ENCODE measurements at regions of chr1 and their contacts with region 1.

Region 1: GRCh38 chr1:23539698-23540266 is 8.7 kb upstream of the E2F2 start:
- DNase-seq: peak; percentile 79 to 93 (median 85)
- ATAC-seq: peak; percentile 91 to 95 (median 94)
- H3K4me3 ChIP-seq: peak overlapping the region in 1 of 4 donors; percentile 21
- H3K27ac ChIP-seq: no peak overlapping the region
- H3K4me1 ChIP-seq: peaks cover 0 to 7% (median 0%) of the 10 kb centered on the region in 3 donors
- H3K27me3 ChIP-seq: no peaks in the 10 kb centered on the region
- CTCF ChIP-seq: peak; percentile 76 to 90 (median 89)

Region 2: DNA sequence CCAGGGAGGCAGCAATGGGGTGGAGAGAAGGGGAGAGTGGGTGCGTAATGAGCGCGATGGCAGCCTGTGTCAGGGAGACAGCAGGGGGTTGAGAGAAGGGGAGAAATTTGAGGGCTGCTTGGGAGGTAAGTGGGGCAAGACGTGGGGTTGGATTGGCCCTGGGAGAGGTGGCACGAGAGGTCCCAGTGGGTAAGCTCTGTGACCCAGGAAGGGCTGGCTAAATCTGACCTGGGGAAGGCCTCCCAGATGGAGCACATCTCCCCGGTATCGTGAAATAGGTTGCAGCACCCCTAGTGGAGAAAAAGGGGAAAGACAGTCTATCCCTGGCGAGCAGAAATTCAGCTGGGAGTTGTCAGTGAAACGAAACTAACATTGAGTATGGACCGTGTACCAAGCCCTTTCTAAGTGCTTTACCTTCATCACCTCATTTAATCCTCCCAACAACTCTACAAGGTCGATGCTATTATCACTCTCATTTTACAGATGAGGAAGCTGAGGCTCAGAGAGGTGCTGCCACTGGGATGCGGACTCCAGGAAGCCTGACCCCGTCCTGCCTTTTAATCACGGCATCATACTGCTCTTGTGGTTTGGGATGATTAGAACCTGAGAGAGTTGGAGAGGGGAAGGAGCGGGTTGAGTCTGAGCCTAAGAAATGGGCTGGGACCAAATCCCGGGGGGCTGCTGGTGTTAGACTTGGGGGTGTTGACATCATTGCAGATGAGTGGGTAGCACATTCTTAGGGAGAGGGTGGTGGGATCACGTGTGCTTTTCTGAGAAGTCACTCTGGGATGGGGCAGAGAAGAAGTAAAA is 95.3 kb after region 1 on chr1:
- intact Hi-C with region 1: loop called (anchors 2 to 10 kb)
- DNase-seq: peak in 4 of 6 donors; percentile 43 to 73 (median 52)
- ATAC-seq: peak; percentile 68 to 89 (median 85)
- H3K4me3 ChIP-seq: peak overlapping the region in 1 of 4 donors; percentile 28
- H3K27ac ChIP-seq: peak overlapping the region in 1 of 4 donors; percentile 14
- H3K4me1 ChIP-seq: peaks cover 0 to 3% (median 0%) of the 10 kb centered on the region in 3 donors
- H3K27me3 ChIP-seq: no peaks in the 10 kb centered on the region
- CTCF ChIP-seq: peak; percentile 80 to 92 (median 86)